ENCODE measurements at regions of chr9 and their contacts with region 1.

Region 1: GRCh38 chr9:137046098-137046787 is at the start of gene NPDC1:
- DNase-seq: peak; percentile 61
- ATAC-seq: peak; percentile 76
- H3K4me3 ChIP-seq: peak within 1 kb of the TSS; percentile 63
- H3K27ac ChIP-seq: no peak within 1 kb of the TSS; the same call in 1 of the 2 replicates
- H3K4me1 ChIP-seq: peaks cover 11% of the 10 kb centered on the region
- H3K27me3 ChIP-seq: peaks cover 32% of the 10 kb centered on the region
- CTCF ChIP-seq: peak; percentile 89
- POLR2A ChIP-seq: no peak
- RAD21 ChIP-seq: peak; percentile 74
- total RNA-seq, gene NPDC1: 2.7 and 2.8 TPM in 2 replicates

Region 2: DNA sequence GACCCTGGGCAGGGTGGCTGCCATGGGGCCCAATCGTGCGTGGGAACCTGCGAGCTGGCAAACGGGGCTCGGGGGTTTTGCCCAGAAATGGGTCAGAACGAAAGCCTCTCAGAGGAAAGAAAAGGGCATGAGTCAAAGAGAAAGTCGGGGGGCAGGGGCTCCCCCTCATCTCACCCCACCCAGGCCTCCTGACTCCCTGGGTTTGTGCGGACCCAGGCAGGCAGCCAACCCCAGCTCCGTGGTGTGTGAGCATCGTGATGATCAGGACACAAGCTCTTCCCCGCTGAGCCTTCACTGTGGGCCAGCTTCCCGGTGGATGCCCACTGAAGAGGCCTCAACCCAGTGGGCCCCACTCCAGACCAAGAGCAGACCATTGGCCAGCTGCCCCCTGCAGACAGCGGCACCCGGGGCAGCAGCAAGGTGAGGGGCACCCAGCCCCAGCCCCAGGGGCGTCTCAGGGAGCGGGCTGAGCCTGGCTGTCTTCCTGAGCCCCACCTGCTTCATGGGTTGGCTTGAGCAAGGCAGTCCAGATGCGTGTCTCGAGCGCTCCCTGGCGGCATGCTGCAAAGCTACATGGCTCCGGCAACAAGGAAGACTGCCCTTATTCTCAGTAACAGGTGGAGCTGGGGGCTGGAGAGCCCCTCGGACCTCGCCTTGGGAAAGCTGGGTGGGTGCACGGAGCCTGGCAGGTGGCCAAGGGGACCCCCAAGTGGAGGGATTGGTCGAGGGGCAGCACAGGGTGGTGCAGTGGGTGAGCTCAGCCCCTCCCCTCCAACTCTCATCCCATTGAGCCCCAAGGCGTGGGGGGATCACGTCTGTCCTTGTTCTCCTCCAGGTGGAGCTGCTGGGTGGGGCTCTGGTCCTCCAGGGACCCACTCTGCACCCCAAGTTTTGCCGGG is 11.1 kb before region 1 on chr9:
- CTCF ChIA-PET with region 1: interaction called, 14 read pairs
- POLR2A ChIA-PET with region 1: no interaction called
- dilution Hi-C with region 1: no loop called
- in situ Hi-C with region 1: no loop called
- intact Hi-C with region 1: no loop called
- DNase-seq: peak; percentile 77
- ATAC-seq: peak; percentile 97
- H3K4me3 ChIP-seq: no peak overlapping the region
- H3K27ac ChIP-seq: no peak overlapping the region
- H3K4me1 ChIP-seq: no peaks in the 10 kb centered on the region
- H3K27me3 ChIP-seq: peaks cover 2% of the 10 kb centered on the region; the same call in 1 of the 2 replicates
- CTCF ChIP-seq: peak; percentile 88
- POLR2A ChIP-seq: no peak
- RAD21 ChIP-seq: peak; percentile 87

Region 3: GRCh38 chr9:137064027-137064879 is 18.0 kb after region 1 on chr9:
- CTCF ChIA-PET with region 1: interaction called, 17 read pairs
- POLR2A ChIA-PET with region 1: no interaction called
- dilution Hi-C with region 1: no loop called
- in situ Hi-C with region 1: no loop called
- intact Hi-C with region 1: loop called (anchors 1 kb)
- DNase-seq: no peak
- ATAC-seq: peak; percentile 95
- H3K4me3 ChIP-seq: no peak overlapping the region
- H3K27ac ChIP-seq: no peak overlapping the region
- H3K4me1 ChIP-seq: no peaks in the 10 kb centered on the region
- H3K27me3 ChIP-seq: no peaks in the 10 kb centered on the region
- CTCF ChIP-seq: peak; percentile 83
- POLR2A ChIP-seq: no peak
- RAD21 ChIP-seq: peak; percentile 67

Region 4: DNA sequence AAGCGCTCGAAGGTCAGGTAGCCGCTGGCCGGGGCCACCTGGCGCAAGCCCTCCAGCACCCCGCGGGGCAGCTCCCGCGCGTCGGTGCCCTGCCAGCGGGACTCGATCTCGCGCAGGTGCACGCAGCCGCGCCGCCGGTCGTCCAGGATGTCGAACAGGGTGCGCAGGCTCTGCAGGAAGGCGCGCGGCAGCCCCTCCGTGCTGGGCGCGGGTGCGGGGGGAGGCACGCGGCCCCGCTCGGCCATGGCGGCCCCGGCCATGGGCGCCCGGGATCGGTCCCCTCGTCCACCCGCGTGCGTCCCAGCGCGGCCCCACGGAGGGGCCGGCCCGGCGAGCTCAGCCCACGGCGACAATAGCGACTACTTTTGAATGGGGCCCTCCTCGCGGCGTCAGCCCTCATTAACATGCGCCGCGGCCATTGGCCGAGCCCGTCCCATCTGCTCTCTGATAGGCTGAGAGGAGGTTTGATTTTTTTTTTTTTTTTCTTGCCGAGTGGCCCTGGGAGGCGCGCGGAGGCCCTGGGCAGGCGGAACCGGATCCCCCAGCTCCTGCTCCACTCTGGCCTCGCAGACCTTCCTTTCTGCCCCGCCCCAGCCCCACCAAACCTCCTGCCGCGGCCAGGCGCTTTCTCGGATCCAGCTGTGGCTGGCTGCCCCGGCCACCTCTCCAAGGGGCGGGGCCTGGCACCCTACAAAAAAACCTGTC is 24.1 kb after region 1 on chr9 and contains the start of gene SAPCD2:
- CTCF ChIA-PET with region 1: interaction called, 5 read pairs
- POLR2A ChIA-PET with region 1: no interaction called
- dilution Hi-C with region 1: no loop called
- in situ Hi-C with region 1: no loop called
- intact Hi-C with region 1: loop called (anchors 1 kb)
- DNase-seq: peak; percentile 79
- ATAC-seq: peak; percentile 94
- H3K4me3 ChIP-seq: peak within 1 kb of the TSS; percentile 53
- H3K27ac ChIP-seq: no peak within 1 kb of the TSS; the same call in 1 of the 2 replicates
- H3K4me1 ChIP-seq: peaks cover 3% of the 10 kb centered on the region; the same call in 1 of the 2 replicates
- H3K27me3 ChIP-seq: no peaks in the 10 kb centered on the region; the same call in 1 of the 2 replicates
- CTCF ChIP-seq: no peak
- POLR2A ChIP-seq: no peak
- RAD21 ChIP-seq: no peak
- total RNA-seq, gene SAPCD2: 3.3 and 3.4 TPM in 2 replicates